Left ventricle myocardium superior (tissue), 1 donor: ENCODE measurements at regions of chr5 and their contacts with region 1.

Region 1: GRCh38 chr5:143395638-143396352 is 7.7 kb downstream of the NR3C1 start:
- DNase-seq: no peak
- ATAC-seq: no peak

Region 2: DNA sequence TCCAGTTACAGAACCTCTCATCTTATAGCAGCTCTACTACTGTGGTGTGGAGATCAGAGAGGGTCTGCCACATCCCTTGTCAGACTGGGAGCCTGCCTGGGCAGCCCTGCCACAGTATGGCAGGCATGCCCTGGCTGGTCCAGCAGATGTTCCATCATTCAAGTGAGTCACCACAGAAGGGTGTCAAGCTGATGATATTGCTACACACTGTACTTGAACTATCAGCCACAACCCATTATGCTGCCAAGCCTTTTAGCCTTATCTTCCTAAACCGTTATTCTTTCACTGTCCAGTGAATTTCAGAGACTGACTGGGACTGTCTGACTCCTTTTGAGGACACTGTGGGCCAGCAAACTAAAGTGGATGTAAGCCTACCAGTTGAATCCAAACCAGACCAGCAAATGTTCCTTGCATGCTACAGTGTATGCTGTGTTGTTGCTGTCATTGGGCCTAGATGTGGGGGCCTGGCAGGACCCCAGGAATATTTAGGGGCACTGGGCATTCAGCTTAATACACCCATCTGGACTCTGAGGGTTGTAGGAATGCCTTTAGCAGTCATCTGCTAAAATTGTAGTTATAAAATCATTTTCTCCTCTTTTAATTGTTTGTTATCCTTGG is 194.9 kb before region 1 on chr5:
- intact Hi-C with region 1: loop called (anchors 10 kb)
- DNase-seq: peak; percentile 69
- ATAC-seq: peak; percentile 98

Region 3: DNA sequence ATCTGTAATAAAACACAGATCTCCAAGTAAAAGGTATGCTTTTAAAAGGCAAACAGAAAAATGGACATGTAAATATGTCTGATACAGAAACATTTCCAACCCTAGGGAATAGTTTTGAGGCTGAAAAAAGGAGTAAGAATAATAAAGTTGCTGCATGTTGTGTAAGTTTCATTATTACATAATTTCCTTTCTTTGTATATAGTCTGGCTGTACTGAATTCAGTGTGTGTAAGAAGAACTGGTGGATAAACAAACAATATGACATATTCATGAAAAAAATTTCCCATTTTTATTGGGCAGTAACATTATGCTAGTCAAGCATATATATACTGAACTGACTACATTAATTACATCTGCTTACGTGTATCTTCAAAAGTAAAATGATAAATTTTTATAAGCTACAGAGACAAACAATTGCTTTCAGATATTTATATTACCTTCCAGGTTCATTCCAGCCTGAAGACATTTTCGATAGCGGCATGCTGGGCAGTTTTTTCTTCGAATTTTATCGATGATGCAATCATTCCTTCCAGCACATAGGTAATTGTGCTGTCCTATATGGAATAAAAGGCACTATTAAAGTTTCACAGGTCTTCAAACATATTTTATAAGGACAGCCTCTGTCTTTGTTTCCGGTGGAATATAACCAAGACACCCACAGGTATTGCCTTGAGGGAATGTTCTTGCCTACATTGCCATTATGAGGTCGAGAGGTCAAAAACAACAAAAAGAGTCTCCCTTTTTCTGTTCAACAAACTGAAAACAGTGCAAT is 85.9 kb before region 1 on chr5:
- intact Hi-C with region 1: loop called (anchors 10 kb)
- DNase-seq: no peak
- ATAC-seq: no peak

Region 4: DNA sequence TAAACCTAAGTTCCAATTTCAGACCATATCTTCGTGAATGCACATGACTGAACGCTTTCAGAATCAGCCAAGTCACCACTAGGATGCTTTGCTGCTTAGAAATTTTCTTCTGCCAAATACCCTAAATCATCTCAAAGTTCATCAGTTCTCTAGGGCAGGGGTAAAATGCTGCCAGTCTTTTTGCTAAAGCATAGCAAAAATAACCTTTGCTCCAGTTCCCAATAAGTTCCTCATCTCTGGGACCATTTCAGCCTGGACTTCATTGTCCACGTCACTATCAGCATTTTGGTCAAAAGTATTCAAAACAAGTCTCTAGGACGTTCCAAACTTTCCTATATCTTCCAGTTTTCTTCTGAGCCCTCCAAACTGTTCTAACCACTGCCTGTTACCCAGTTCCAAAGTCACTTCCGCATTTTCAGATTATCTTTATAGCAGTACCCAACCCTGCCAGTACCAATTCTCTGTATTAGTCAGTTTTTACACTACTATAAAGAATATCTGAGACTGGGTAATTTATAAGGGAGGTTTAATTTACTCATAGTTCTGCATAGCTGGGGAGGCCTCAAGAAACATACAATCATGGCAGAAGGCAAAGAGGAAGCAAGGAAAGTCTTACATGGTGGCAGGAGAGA is 67.1 kb before region 1 on chr5:
- intact Hi-C with region 1: no loop called
- DNase-seq: no peak
- ATAC-seq: no peak